B cell (primary cell): ENCODE measurements at regions of chr15 and their contacts with region 1.

Region 1: DNA sequence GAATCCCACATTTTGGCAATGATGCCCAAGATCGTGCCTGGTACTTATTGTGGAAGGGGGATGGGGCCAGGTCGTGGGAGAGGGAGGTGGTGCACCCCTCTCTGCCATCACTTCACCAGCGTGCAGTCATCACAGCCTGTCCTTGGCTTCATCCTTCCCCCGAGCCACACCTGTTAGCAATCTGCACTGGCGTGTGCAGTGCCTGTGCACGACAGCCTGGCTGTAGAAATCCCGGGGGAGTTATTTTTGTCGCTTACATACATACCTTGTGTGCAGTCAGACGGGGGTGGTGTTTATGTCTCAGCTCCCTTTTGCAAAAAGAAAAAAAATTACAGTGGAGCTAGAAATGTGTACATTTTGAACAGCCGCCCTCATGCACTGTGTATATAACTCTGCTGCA is 216.0 kb downstream of the TLE3 start:
- DNase-seq: peak; percentile 88
- ATAC-seq: peak; percentile 91
- H3K4me3 ChIP-seq: no peak overlapping the region
- H3K4me3 Mint-ChIP-seq: peak overlapping the region; percentile 82
- H3K27ac ChIP-seq: no peak overlapping the region
- H3K27ac Mint-ChIP-seq: peak overlapping the region; percentile 92
- H3K4me1 ChIP-seq: peaks cover 22 to 35% of the 10 kb centered on the region in 2 donors
- H3K4me1 Mint-ChIP-seq: peaks cover 42% of the 10 kb centered on the region
- H3K27me3 ChIP-seq: peaks cover 0 to 18% (median 0%) of the 10 kb centered on the region in 4 experiments
- H3K27me3 Mint-ChIP-seq: no peaks in the 10 kb centered on the region
- CTCF ChIP-seq: no peak

Region 2: DNA sequence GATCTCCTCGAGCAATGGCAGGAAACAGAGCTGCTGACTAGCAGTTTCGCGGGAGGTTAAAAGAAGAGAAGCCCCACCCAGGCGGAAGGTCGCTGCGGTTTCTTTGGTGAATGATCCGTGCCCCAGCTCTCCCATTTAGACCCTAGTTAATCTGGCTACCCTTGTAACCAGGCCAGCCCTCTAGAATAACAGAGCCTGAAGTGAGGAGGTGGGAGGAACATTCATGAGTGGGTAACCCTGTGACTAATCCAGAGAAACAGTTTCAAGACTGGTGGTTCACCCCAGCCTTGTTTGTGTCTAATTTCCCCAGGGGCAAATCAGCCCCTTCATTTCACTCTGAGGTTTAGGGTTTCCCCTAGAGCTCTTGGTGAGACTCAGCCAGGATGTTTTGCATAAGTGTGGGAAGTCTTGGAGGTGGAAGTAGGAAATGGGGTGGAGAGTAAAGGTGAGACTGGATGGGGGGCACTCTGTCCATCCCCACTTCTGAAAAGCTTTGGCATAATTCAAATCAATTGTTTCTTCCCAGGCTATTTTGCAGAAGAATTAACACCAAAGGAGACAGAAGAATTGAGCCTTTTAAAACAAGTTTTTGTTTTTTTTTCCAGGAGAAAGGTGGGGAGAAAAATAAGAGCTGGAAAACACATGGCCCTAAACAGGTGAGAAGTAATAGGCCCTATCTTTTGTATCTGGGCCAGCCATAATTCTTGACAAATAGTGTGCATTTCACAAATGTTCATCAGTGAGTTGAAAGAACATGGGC is 126.0 kb before region 1 on chr15:
- CTCF ChIA-PET with region 1: interaction called, 4 read pairs
- POLR2A ChIA-PET with region 1: interaction called, 16 read pairs
- intact Hi-C with region 1: loop called (anchors 1 kb)
- DNase-seq: peak; percentile 84
- ATAC-seq: peak; percentile 85
- H3K4me3 ChIP-seq: peak overlapping the region in 2 of 5 experiments; percentile 8 to 23
- H3K4me3 Mint-ChIP-seq: peak overlapping the region; percentile 84
- H3K27ac ChIP-seq: peak overlapping the region; percentile 22 to 73
- H3K27ac Mint-ChIP-seq: peak overlapping the region; percentile 91
- H3K4me1 ChIP-seq: peaks cover 69 to 72% of the 10 kb centered on the region in 2 donors
- H3K4me1 Mint-ChIP-seq: peaks cover 79% of the 10 kb centered on the region
- H3K27me3 ChIP-seq: no peaks in the 10 kb centered on the region
- H3K27me3 Mint-ChIP-seq: no peaks in the 10 kb centered on the region
- CTCF ChIP-seq: no peak

Region 3: DNA sequence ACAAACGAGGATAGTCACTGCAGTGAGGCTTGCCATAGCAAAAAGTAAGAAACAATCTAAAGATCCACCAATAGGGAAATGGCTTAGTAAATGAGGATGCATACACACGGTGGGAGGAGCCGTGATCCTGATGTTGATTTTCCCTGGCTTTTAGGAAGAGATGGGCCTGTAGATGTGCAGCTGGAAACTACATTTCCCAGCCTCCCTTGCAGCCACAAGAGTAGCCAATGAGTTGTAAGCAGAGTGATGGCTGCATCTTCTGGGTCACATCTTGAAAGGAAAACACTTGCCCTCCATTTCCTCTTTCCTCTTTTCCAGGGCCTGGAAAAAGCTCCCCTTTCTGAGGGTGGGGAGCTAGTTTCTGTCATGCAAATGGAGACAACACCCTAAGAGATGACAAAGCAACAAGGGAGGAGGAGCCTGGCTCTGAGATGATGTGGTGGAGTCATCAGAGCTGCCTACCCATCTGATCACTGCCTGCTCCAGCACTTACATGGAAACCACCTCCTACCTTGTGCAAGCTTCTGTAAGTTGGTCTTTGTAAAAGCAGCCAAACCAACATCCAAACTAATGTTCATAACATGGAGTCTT is 76.8 kb after region 1 on chr15:
- CTCF ChIA-PET with region 1: no interaction called
- POLR2A ChIA-PET with region 1: interaction called, 7 read pairs
- intact Hi-C with region 1: loop called (anchors 5 kb)
- DNase-seq: no peak
- ATAC-seq: no peak
- H3K4me3 ChIP-seq: no peak overlapping the region
- H3K4me3 Mint-ChIP-seq: no peak overlapping the region
- H3K27ac ChIP-seq: no peak overlapping the region
- H3K27ac Mint-ChIP-seq: no peak overlapping the region
- H3K4me1 ChIP-seq: peaks cover 0 to 9% of the 10 kb centered on the region in 2 donors
- H3K4me1 Mint-ChIP-seq: peaks cover 14% of the 10 kb centered on the region
- H3K27me3 ChIP-seq: peaks cover 0 to 7% (median 0%) of the 10 kb centered on the region in 4 experiments
- H3K27me3 Mint-ChIP-seq: peaks cover 8% of the 10 kb centered on the region
- CTCF ChIP-seq: no peak

Region 4: DNA sequence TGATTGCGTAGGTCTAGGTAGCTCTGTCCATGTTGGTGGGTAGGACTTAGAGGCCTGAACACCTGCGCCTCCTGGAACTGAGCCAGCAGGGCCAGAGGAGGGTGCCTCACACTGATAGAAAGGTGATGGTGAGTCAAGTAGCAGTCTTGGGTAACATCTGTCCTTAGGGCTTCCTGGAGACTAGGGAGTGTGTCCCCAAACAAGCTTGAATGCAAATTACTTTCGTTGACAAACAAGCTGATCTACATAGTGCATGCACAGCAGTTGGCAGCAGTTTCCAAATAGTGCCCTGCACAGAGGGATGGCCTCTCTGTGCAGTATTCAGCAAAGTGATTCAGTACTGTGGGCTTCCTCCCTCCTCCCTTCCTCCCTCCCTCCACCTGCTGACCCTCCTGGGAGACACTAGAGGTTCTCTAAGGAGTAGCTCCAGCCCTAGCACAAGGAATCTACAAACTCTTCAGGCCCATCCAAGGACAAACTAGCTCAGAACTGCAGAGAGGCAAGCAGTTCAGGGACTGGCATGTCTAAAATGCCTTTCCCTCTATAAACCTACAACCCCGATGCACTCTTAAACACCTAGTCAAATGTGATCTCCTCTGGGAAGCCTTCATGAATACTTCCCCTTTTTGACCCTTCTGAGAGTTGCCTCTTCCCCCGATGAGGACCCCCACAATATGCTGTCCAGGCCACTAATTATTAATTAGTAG is 155.0 kb after region 1 on chr15:
- CTCF ChIA-PET with region 1: interaction called, 6 read pairs
- POLR2A ChIA-PET with region 1: interaction called, 4 read pairs
- intact Hi-C with region 1: loop called (anchors 5 kb)
- DNase-seq: peak; percentile 75
- ATAC-seq: peak; percentile 69
- H3K4me3 ChIP-seq: peak overlapping the region in 2 of 5 experiments; percentile 11 to 13
- H3K4me3 Mint-ChIP-seq: peak overlapping the region; percentile 75
- H3K27ac ChIP-seq: peak overlapping the region; percentile 70 to 78
- H3K27ac Mint-ChIP-seq: peak overlapping the region; percentile 91
- H3K4me1 ChIP-seq: peaks cover 39 to 48% of the 10 kb centered on the region in 2 donors
- H3K4me1 Mint-ChIP-seq: peaks cover 59% of the 10 kb centered on the region
- H3K27me3 ChIP-seq: no peaks in the 10 kb centered on the region
- H3K27me3 Mint-ChIP-seq: no peaks in the 10 kb centered on the region
- CTCF ChIP-seq: no peak

Region 5: DNA sequence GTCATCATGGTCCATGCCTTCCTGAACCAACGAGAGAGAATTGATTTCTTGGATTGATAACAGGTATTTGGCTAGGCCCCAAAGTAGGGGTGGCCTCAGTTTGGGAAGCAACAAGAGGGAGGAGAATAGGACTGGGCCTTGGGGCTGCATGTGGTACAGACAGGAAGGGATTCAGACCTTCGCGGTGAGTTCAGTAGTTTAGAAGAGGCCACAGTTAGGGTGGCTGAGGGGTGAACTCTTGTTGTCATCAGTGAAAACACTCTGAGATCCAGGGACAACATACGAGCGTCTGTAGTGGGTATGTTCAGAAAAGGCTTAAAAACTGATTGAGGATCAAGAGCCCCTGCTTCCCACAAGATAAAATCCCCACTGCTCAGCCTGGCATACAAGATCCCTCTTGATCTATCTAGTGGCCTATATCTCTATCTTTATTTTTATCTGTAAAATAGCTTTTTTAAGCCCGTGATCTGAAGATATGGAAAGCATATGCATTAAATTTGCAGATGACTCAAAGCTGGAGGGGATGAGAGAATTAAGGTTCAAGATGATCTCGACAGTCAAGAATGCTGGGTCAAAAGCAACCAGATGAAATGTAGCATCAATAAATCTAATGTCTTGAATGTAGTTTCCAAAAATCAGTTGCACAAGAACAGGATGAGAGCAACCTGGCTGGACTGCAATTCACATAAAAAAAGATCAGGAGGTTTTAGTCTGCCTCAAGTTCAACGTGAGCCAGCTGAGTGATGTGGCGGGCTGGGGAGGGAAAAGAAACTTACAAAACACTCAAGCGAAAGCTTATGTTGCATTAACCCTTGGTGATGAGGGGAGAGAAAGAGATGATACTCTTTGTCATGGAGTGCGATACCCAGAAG is 437.1 kb after region 1 on chr15:
- CTCF ChIA-PET with region 1: no interaction called
- POLR2A ChIA-PET with region 1: no interaction called
- intact Hi-C with region 1: loop called (anchors 2 kb)
- DNase-seq: peak; percentile 40
- ATAC-seq: peak; percentile 37
- H3K4me3 ChIP-seq: peak overlapping the region in 3 of 5 experiments; percentile 24 to 34 (median 28)
- H3K4me3 Mint-ChIP-seq: peak overlapping the region; percentile 79
- H3K27ac ChIP-seq: peak overlapping the region; percentile 86 to 97
- H3K27ac Mint-ChIP-seq: peak overlapping the region; percentile 91
- H3K4me1 ChIP-seq: peaks cover 58 to 68% of the 10 kb centered on the region in 2 donors
- H3K4me1 Mint-ChIP-seq: peaks cover 61% of the 10 kb centered on the region
- H3K27me3 ChIP-seq: no peaks in the 10 kb centered on the region
- H3K27me3 Mint-ChIP-seq: no peaks in the 10 kb centered on the region
- CTCF ChIP-seq: no peak